Naive thymus-derived CD4-positive, alpha-beta T cell (primary cell): ENCODE measurements at regions of chr18 and their contacts with region 1.

Region 1: DNA sequence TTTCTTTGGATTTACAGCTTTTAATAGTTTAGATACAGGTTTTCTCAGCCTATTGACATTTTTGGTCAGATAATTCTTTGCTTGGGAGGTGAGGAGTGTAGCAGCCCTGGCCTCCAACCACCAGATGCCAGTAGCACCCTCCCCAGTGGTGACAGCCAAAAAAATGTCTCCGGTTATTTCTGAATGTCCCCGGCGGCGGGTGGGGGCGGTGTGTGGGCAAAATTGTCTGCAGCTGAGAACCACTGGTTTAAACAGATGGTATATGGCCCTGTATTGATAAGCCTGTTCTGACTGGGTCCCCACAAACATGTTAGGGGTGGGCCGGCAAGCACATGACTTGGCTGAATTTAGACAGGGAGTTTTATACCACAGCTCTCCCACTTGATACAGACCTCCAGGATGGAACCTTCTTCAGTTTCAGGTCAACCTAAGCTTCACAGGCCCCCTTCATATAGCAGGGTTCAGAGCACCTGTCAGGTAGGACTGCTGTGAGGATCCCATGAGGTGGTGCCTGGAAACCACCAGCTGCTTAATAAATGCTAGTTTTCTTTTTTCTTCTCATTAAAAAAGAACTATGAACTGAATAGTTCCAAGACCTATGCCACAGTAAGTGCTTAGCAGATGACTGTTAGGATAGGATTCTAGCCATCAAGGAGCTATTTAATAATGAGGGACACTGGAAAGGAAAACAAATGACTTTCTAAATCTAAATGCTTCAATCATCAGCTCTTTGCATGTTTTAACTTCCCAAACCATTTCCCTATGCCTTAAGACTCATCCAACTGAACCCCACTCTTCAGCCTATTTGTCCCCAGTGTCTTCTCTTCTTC is 18.1 kb downstream of the LPIN2 start:
- DNase-seq: peak; percentile 57 to 83 (median 77)
- ATAC-seq: peak; percentile 92
- H3K4me3 ChIP-seq: peak overlapping the region; percentile 35
- H3K4me3 Mint-ChIP-seq: peak overlapping the region; percentile 41 to 80 (median 68)
- H3K27ac ChIP-seq: peak overlapping the region; percentile 62
- H3K27ac Mint-ChIP-seq: peak overlapping the region; percentile 54 to 91 (median 84)
- H3K4me1 ChIP-seq: peaks cover 38 to 47% of the 10 kb centered on the region in 2 donors
- H3K4me1 Mint-ChIP-seq: peaks cover 48 to 87% (median 83%) of the 10 kb centered on the region in 7 donors
- H3K27me3 ChIP-seq: no peaks in the 10 kb centered on the region
- H3K27me3 Mint-ChIP-seq: no peaks in the 10 kb centered on the region

Region 2: GRCh38 chr18:3093624-3094337 is 99.0 kb after region 1 on chr18:
- CTCF ChIA-PET with region 1: interaction called, 10 read pairs
- POLR2A ChIA-PET with region 1: interaction called, 3 read pairs
- intact Hi-C with region 1: no loop called
- DNase-seq: no peak
- ATAC-seq: no peak
- H3K4me3 ChIP-seq: no peak overlapping the region
- H3K4me3 Mint-ChIP-seq: no peak overlapping the region
- H3K27ac ChIP-seq: no peak overlapping the region
- H3K27ac Mint-ChIP-seq: peak overlapping the region in 3 of 9 donors; percentile 14 to 80 (median 14)
- H3K4me1 ChIP-seq: peaks cover 13 to 21% of the 10 kb centered on the region in 2 donors
- H3K4me1 Mint-ChIP-seq: peaks cover 17 to 36% (median 28%) of the 10 kb centered on the region in 7 donors
- H3K27me3 ChIP-seq: no peaks in the 10 kb centered on the region
- H3K27me3 Mint-ChIP-seq: no peaks in the 10 kb centered on the region

Region 3: DNA sequence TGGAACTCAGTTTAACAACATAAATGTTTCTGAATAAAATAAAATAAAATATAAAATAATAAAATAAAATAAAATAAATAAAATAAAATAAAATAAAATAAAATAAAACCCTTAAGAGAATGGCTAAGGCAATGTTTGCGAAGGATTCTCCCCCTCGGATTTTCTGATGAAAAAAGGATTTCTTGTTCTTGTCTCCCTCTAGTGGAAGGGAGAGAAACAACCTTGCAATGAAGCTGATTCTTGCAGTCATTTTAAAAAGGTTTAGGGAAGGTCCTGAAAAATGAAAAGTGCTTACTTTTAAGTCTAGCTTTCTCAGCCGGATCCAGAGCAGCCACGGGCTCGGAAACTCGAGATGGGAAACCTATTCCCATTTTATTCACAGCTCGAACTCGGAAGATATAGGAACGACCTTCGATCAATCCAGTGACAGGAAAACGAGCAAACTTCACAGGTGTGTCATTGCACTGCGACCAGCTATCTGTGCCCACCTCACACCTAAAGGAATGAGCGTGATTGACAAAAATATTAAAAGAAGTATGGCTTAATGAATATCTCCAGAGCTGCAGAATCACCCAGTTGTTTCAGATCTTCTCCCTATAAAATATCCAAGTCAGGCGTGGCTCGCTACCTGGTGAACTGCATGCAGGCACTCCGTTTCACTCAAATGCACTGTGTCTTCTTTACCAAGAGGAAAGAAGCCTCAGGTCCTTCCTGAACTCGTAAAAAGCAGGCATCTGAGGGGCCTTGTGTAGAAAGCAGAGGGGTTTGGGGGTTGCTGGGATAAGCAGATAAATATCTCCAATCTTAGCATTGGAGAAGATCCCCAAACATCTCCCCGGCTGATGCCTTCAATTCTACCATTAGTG is 156.8 kb after region 1 on chr18:
- CTCF ChIA-PET with region 1: interaction called, 40 read pairs
- POLR2A ChIA-PET with region 1: interaction called, 10 read pairs
- intact Hi-C with region 1: loop called (anchors 1 kb)
- DNase-seq: peak in 7 of 9 donors; percentile 12 to 50 (median 31)
- ATAC-seq: peak; percentile 45
- H3K4me3 ChIP-seq: no peak overlapping the region
- H3K4me3 Mint-ChIP-seq: no peak overlapping the region
- H3K27ac ChIP-seq: no peak overlapping the region
- H3K27ac Mint-ChIP-seq: peak overlapping the region in 2 of 9 donors; percentile 23 to 34
- H3K4me1 ChIP-seq: peaks cover 0 to 3% of the 10 kb centered on the region in 2 donors
- H3K4me1 Mint-ChIP-seq: peaks cover 3 to 12% (median 7%) of the 10 kb centered on the region in 7 donors
- H3K27me3 ChIP-seq: no peaks in the 10 kb centered on the region
- H3K27me3 Mint-ChIP-seq: peaks cover 0 to 8% (median 0%) of the 10 kb centered on the region in 5 donors

Region 4: DNA sequence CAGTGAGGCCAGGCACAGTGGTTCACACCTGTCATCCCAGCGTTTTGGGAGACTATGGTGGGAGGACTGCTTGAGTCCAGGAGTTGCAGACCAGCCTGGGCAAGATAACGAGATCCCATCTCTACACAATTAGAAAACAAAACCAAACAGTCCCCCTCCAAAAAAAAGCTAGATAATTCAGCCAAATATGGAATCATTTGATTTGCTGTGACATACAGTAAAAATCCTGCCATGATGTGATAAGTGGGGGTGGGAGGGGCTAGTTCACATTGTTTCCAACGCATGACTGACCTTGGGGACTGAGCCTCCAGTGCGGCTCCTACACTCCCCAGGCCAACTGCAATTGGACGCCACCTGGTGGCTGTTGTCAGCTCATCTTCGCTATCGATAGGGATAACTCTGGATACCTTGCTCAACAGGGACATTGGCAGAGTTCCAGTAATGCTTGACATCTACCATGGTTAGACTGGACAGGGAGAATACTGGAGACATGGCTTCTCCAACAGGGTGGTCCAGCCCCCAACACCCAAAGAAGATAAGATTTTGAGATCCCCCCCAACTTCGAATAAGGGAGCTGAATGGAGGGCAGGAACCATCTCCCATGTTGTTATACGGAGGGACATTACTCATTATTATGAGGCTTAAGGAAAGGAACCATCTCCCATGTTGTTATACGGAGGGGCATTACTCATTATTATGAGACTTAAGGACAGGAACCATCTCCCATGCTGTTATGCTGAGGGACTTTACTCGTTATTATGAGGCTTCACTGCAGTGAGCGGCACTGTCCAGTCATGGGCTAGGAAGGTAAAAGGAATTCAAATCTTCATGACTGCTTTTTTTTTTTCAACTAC is 591.1 kb after region 1 on chr18:
- CTCF ChIA-PET with region 1: no interaction called
- POLR2A ChIA-PET with region 1: no interaction called
- intact Hi-C with region 1: no loop called
- DNase-seq: peak in 8 of 9 donors; percentile 40 to 60 (median 48)
- ATAC-seq: peak; percentile 90
- H3K4me3 ChIP-seq: no peak overlapping the region
- H3K4me3 Mint-ChIP-seq: peak overlapping the region in 3 of 10 donors; percentile 4 to 34 (median 16)
- H3K27ac ChIP-seq: no peak overlapping the region
- H3K27ac Mint-ChIP-seq: peak overlapping the region in 7 of 9 donors; percentile 28 to 93 (median 65)
- H3K4me1 ChIP-seq: no peaks in the 10 kb centered on the region
- H3K4me1 Mint-ChIP-seq: peaks cover 0 to 29% (median 11%) of the 10 kb centered on the region in 7 donors
- H3K27me3 ChIP-seq: no peaks in the 10 kb centered on the region
- H3K27me3 Mint-ChIP-seq: no peaks in the 10 kb centered on the region